Transverse colon (tissue), 4 donors: ENCODE measurements at regions of chr12 and their contacts with region 1.

Region 1: DNA sequence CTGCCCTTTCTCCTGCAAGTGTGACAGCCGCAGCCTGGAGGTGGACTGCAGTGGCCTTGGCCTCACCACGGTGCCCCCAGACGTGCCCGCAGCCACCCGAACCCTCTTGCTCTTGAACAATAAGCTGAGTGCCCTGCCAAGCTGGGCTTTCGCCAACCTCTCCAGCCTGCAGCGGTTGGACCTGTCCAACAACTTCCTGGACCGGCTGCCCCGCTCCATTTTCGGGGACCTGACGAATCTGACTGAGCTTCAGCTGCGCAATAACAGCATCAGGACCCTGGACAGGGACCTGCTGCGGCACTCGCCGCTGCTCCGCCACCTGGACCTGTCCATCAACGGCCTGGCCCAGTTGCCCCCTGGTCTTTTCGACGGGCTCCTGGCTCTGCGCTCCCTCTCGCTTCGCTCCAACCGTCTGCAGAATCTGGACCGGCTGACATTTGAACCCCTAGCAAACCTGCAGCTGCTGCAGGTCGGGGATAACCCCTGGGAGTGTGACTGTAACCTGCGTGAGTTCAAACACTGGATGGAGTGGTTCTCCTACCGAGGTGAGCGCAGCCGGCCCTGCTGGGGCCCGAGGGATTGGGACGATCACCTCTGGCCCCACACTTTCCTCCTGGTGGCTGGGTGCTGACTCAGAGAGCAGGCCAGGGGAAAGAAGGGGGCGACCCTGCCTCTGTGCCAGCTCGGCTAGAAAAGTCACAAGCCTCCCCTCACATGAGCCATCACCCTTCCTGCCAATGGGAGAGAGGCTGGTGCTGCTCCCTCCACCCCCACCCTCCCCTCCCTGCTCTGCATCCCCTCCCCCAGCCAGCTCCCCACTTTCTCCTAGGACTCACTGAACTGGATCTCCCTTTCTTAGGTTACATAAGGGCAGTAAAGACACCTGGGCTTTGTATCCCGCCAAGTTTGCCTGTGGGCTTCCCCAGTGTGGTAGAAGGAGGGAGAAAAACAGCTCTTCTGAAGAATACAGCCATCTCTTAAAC is 10.9 kb downstream of the LRTM2 start:
- DNase-seq: peak; percentile 43
- H3K4me3 ChIP-seq: no peak overlapping the region
- H3K27ac ChIP-seq: no peak overlapping the region
- H3K4me1 ChIP-seq: no peaks in the 10 kb centered on the region
- H3K27me3 ChIP-seq: peaks cover 37% of the 10 kb centered on the region
- CTCF ChIP-seq: no peak
- EP300 ChIP-seq: no peak
- POLR2A ChIP-seq: no peak

Region 2: GRCh38 chr12:1907652-1908611 is 76.7 kb after region 1 on chr12:
- in situ Hi-C with region 1: no loop called
- intact Hi-C with region 1: loop called (anchors 10 kb)
- DNase-seq: peak; percentile 49
- H3K4me3 ChIP-seq: peak overlapping the region in 2 of 4 donors; percentile 25 to 31
- H3K27ac ChIP-seq: no peak overlapping the region
- H3K4me1 ChIP-seq: peaks cover 0 to 7% (median 0%) of the 10 kb centered on the region in 4 donors
- H3K27me3 ChIP-seq: peaks cover 3% of the 10 kb centered on the region
- CTCF ChIP-seq: no peak
- EP300 ChIP-seq: no peak
- POLR2A ChIP-seq: no peak